ENCODE measurements at regions of chr9 and their contacts with region 1.

Region 1: GRCh38 chr9:114385412-114386181 is 2.2 kb downstream of the AKNA start:
- DNase-seq: peak; percentile 86
- CTCF ChIP-seq: no peak

Region 2: GRCh38 chr9:114339130-114339908 is 46.3 kb before region 1 on chr9:
- CTCF ChIA-PET with region 1: interaction called, 18 read pairs
- POLR2A ChIA-PET with region 1: no interaction called
- DNase-seq: peak; percentile 86
- CTCF ChIP-seq: peak; percentile 78

Region 3: GRCh38 chr9:114366334-114367128 is 19.1 kb before region 1 on chr9:
- CTCF ChIA-PET with region 1: interaction called, 100 read pairs
- POLR2A ChIA-PET with region 1: interaction called, 4 read pairs
- DNase-seq: peak; percentile 48
- CTCF ChIP-seq: no peak

Region 4: GRCh38 chr9:114397848-114398605 is 12.4 kb after region 1 on chr9:
- CTCF ChIA-PET with region 1: interaction called, 60 read pairs
- POLR2A ChIA-PET with region 1: interaction called, 6 read pairs
- DNase-seq: peak; percentile 98
- CTCF ChIP-seq: no peak

Measured in GM10248 (cell line).